Panc1 (cell line): ENCODE measurements at regions of chr9 and their contacts with region 1.

Region 1: DNA sequence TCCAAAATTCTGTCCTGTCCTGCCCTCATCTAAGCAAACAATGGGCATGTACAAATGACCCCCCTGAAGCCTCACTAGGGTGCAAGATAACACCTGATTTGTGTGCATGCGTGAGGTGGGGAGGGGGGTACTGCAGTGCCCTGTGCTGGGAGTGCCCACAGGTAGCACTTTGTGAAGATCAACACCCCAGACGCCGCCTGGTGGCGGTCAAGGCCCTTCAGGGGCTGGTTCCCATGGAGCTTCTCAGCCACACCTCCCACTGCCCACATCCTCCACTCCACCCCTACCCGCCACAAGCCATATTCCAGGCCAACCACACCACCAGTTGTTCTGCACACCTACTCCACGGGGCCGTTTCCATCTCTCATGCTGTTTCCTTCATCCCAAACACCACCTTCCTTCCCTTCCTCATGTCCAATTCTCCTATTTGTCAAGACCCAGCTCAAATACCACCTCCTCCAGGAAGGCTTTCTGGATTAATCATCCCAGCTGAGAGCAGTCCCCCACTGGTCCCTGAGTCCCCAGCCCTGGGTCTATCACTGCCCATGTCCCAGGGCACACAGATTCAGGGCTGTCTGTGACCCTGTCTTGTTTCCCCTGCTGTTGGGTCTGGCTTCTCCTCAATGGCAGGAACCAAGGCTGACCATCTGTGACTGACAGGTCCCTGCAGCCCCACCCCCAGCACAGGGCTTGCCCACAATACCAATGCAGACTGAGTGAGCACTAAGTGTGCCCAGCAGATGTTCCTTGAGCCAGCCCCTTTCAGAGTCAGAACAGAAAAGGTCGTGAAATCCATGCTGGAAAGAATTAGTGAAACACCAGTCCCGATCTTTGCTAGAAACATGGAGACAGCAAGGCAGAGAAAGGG is 178.4 kb downstream of the PAX5 start:
- DNase-seq: peak; percentile 8
- ATAC-seq: peak; percentile 93
- H3K4me3 ChIP-seq: no peak overlapping the region
- H3K27ac ChIP-seq: no peak overlapping the region
- H3K4me1 ChIP-seq: 0 out of 2 replicates have a peak, but pooled peaks cover 2% of the 10 kb centered on the region
- H3K27me3 ChIP-seq: peaks cover 9% of the 10 kb centered on the region; the same call in 1 of the 2 replicates
- CTCF ChIP-seq: no peak

Region 2: GRCh38 chr9:36728651-36729520 is 126.8 kb before region 1 on chr9:
- CTCF ChIA-PET with region 1: no interaction called
- POLR2A ChIA-PET with region 1: no interaction called
- in situ Hi-C with region 1: no loop called
- intact Hi-C with region 1: no loop called
- DNase-seq: peak; percentile 63
- ATAC-seq: peak; percentile 96
- H3K4me3 ChIP-seq: no peak overlapping the region
- H3K27ac ChIP-seq: no peak overlapping the region
- H3K4me1 ChIP-seq: no peaks in the 10 kb centered on the region
- H3K27me3 ChIP-seq: no peaks in the 10 kb centered on the region; the same call in 1 of the 2 replicates
- CTCF ChIP-seq: no peak

Region 3: GRCh38 chr9:36798350-36799065 is 57.2 kb before region 1 on chr9:
- CTCF ChIA-PET with region 1: no interaction called
- POLR2A ChIA-PET with region 1: no interaction called
- in situ Hi-C with region 1: no loop called
- intact Hi-C with region 1: loop called (anchors 1 kb)
- DNase-seq: no peak
- ATAC-seq: peak; percentile 86
- H3K4me3 ChIP-seq: no peak overlapping the region
- H3K27ac ChIP-seq: no peak overlapping the region
- H3K4me1 ChIP-seq: no peaks in the 10 kb centered on the region
- H3K27me3 ChIP-seq: peaks cover 30% of the 10 kb centered on the region
- CTCF ChIP-seq: no peak